K562 (cell line): ENCODE measurements at regions of chr5 and their contacts with region 1.

Region 1: DNA sequence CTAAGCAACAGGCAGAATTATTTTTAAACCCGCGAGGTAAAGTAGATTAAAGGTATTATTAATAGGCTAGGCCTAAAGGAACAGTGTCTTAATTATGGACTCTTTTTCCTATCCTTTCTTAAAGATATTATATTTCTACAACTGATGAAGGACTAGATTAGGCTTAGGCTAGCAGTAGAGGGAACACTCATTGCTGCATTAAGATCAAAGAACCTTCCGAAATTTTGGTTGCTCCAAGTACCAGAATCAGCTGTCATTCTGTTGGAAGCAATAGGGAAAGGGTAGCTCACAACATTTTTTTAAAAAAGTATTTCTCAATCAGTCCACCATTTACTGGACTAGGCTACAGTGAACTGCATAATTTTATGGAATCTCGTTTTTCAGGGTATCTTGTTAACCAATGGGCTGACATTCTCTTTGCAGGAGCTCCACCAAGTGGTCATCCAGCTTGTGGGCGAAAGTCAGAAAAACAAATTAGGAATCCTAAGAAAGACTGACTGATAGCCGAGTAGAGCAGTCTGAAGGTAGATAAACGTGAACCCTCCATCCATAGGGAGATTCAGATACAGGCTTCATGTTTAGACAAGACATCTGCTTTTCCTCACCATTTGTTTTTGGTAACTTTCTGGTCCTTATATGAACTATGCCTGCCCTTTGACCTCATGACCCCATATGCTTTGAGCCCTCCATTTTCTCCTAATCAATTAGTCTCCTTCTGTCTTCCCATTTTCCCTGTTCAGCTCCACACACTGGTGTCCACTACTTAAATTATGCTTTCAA is 103.6 kb upstream of the CHD1 start:
- DNase-seq: peak; percentile 35 to 84 (median 60)
- ATAC-seq: peak; percentile 84
- H3K4me3 ChIP-seq: no peak overlapping the region
- H3K27ac ChIP-seq: peak overlapping the region; percentile 58; the same call in 1 of the 3 replicates
- H3K4me1 ChIP-seq: peaks cover 0 to 13% of the 10 kb centered on the region in 2 experiments; a peak in 2 of 5 replicates
- H3K27me3 ChIP-seq: no peaks in the 10 kb centered on the region
- CTCF ChIP-seq: peak; percentile 78 to 89 (median 84)
- EP300 ChIP-seq: no peak
- POLR2A ChIP-seq: no peak
- RAD21 ChIP-seq: peak; percentile 97

Region 2: GRCh38 chr5:97183100-97183929 is 1849.1 kb before region 1 on chr5 and contains the start of gene RIOK2:
- CTCF ChIA-PET with region 1: no interaction called
- POLR2A ChIA-PET with region 1: no interaction called
- in situ Hi-C with region 1: loop called (anchors 25 kb)
- intact Hi-C with region 1: no loop called
- DNase-seq: peak; percentile 88 to 98 (median 92)
- ATAC-seq: peak; percentile 96
- H3K4me3 ChIP-seq: peak within 1 kb of the TSS; percentile 74
- H3K27ac ChIP-seq: peak within 1 kb of the TSS; percentile 89
- H3K4me1 ChIP-seq: peaks cover 0 to 5% of the 10 kb centered on the region in 2 experiments; a peak in 3 of 5 replicates
- H3K27me3 ChIP-seq: no peaks in the 10 kb centered on the region
- CTCF ChIP-seq: no peak
- EP300 ChIP-seq: peak; percentile 32; the same call in 1 of the 2 replicates
- POLR2A ChIP-seq: peak; percentile 86
- RAD21 ChIP-seq: no peak
- polyA plus RNA-seq, gene RIOK2: 81.6 to 97.6 TPM

Region 3: DNA sequence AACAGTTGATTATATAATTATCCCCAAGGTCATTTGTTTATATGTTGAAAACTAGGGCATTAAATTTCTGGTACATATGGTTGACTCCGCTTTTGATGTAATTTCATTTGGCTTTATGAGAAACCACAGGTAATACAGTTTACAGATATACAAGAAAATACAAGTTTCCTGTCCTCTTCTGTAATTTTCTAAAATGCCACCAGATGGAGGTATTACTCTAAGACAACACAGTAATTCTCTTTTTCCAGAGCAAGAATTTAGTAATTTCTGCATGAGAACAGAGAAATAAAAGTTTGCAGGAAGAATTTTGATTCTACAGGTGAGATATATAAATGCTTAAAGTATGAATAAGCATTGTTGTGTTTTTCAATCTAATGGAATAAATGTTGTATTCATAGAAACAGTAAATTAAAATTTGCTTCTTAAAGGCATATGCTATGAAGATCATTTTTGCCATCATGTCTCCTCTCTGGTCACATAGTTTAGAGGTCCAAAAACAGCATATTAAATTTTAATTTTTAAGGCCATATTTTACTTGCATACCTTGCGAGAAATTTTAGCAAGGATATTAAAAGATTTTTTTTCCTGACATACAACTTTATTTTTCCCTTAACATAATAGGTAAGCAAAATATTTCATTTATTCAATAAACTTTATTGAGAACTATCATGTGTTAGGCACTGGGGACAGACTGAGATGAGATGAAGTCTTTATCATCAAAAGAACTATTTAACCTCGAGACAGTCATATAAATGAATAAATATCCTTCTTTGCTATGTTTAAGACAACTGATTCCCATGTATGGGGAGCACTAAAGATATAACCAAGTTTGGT is 126.3 kb before region 1 on chr5:
- CTCF ChIA-PET with region 1: interaction called, 53 read pairs
- POLR2A ChIA-PET with region 1: no interaction called
- in situ Hi-C with region 1: loop called (anchors 5 kb)
- intact Hi-C with region 1: loop called (anchors 1 kb)
- DNase-seq: peak in 3 of 4 experiments; percentile 11 to 56 (median 15)
- ATAC-seq: peak; percentile 75
- H3K4me3 ChIP-seq: no peak overlapping the region
- H3K27ac ChIP-seq: no peak overlapping the region
- H3K4me1 ChIP-seq: no peaks in the 10 kb centered on the region
- H3K27me3 ChIP-seq: no peaks in the 10 kb centered on the region
- CTCF ChIP-seq: peak in 2 of 3 experiments; percentile 43 to 75; a peak in 4 of 6 replicates
- EP300 ChIP-seq: no peak
- POLR2A ChIP-seq: no peak
- RAD21 ChIP-seq: peak; percentile 92 to 94

Region 4: DNA sequence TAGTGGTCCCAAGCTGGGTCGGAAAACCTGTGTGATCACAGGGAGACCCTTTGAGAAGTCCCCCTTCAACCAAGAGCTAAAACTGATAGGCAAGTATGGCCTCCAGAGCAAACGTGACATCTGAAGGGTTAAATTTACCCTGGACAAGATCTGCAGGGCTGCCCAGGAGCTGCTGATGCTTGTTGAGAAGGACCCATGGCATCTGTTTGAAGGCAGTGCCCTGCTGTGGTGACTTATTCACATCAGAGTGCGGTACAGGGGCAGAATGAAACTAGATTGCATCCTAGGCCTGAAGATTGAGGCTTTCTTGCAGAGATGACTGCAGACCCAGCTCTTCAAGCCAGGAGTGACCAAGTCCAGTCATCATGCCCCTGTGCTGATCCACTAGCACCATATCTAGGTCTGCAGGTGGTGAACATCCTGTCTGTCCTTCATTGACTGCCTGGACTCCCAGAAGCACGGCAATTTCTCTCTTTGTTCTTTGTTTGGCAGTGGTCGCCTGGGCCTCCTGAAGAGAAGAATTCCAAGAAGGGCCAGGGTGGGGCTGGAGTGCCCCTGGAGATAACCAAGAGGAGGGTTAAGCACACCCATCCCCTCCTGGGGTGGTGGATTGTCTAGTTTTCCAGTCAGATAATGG is 77.9 kb before region 1 on chr5:
- CTCF ChIA-PET with region 1: no interaction called
- POLR2A ChIA-PET with region 1: no interaction called
- in situ Hi-C with region 1: no loop called
- intact Hi-C with region 1: loop called (anchors 2 kb)
- DNase-seq: peak; percentile 27 to 94 (median 58)
- ATAC-seq: peak; percentile 91
- H3K4me3 ChIP-seq: no peak overlapping the region
- H3K27ac ChIP-seq: peak overlapping the region; percentile 78
- H3K4me1 ChIP-seq: peaks cover 7 to 31% of the 10 kb centered on the region in 2 experiments; a peak in 3 of 5 replicates
- H3K27me3 ChIP-seq: no peaks in the 10 kb centered on the region
- CTCF ChIP-seq: no peak
- EP300 ChIP-seq: peak; percentile 78; the same call in 1 of the 2 replicates
- POLR2A ChIP-seq: peak; percentile 47; the same call in 1 of the 2 replicates
- RAD21 ChIP-seq: 0 out of 4 replicates have a peak, but pooled peaks of 1 of the 2 experiments have one; percentile 18

Region 5: DNA sequence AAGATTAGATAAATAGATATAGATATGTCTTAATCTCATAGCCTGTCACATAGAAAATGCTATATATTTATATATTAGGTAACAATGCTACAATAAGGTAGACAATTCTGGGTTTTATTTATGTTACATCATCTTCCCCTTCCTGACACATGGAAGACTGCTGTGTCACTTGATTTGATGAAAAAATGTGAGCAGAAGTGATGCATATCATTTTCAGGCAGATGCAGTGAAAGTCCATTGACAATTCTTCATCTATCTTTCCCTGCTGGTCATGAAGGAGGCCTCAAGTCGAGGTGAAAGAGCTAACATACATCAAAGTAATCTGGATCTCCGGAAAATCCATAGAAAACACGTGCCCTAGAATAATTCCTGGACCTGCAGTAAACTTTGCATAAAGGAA is 45.8 kb before region 1 on chr5:
- CTCF ChIA-PET with region 1: no interaction called
- POLR2A ChIA-PET with region 1: no interaction called
- in situ Hi-C with region 1: no loop called
- intact Hi-C with region 1: no loop called
- DNase-seq: no peak
- ATAC-seq: peak; percentile 59
- H3K4me3 ChIP-seq: no peak overlapping the region
- H3K27ac ChIP-seq: no peak overlapping the region
- H3K4me1 ChIP-seq: peaks cover 0 to 14% of the 10 kb centered on the region in 2 experiments; a peak in 1 of 5 replicates
- H3K27me3 ChIP-seq: no peaks in the 10 kb centered on the region
- CTCF ChIP-seq: no peak
- EP300 ChIP-seq: 0 out of 2 replicates have a peak, but pooled peaks have one; percentile 19
- POLR2A ChIP-seq: no peak
- RAD21 ChIP-seq: no peak

Region 6: GRCh38 chr5:99060306-99061261 is 28.2 kb after region 1 on chr5:
- CTCF ChIA-PET with region 1: interaction called, 5 read pairs
- POLR2A ChIA-PET with region 1: interaction called, 5 read pairs
- in situ Hi-C with region 1: no loop called
- intact Hi-C with region 1: loop called (anchors 1 kb)
- DNase-seq: peak; percentile 65 to 81 (median 72)
- ATAC-seq: peak; percentile 68
- H3K4me3 ChIP-seq: no peak overlapping the region
- H3K27ac ChIP-seq: no peak overlapping the region
- H3K4me1 ChIP-seq: no peaks in the 10 kb centered on the region
- H3K27me3 ChIP-seq: no peaks in the 10 kb centered on the region
- CTCF ChIP-seq: peak; percentile 75 to 85 (median 83)
- EP300 ChIP-seq: no peak
- POLR2A ChIP-seq: no peak
- RAD21 ChIP-seq: peak; percentile 76 to 81